Heart right ventricle (tissue), 16 donors: ENCODE measurements at regions of chr15 and their contacts with region 1.

Region 1: DNA sequence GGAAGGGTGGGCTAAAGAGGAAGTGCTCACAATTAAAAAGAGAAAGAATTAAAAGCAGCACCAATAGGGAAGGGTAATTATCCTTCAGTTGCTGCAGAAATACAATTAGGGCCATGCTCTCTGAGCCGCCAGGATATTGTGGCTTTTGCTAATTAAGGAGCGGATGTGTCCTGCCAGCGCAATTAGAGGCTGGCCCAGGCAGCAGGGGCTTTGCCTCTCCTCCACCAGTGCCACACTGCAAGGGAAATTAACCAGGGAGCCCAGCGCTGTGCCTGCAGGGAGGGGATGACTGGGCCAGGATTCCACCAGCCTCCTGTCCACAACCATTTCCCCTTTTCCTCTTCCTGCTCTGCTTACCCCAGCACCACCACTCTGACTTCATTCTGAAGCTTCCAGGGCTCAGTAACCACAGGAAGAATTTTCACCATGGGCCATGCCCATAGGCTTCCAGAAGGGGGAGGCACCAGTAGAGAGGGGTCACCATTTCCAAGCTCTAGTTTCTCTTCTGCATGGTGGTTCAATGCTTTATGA is 10.4 kb upstream of the AEN start:
- DNase-seq: no peak
- ATAC-seq: peak in 1 of 8 donors; percentile 21
- H3K4me3 ChIP-seq: no peak overlapping the region
- H3K27ac ChIP-seq: no peak overlapping the region
- H3K4me1 ChIP-seq: peaks cover 0 to 6% (median 0%) of the 10 kb centered on the region in 9 donors
- H3K27me3 ChIP-seq: peaks cover 8 to 31% (median 26%) of the 10 kb centered on the region in 7 donors
- CTCF ChIP-seq: peak in 1 of 9 donors; percentile 10

Region 2: DNA sequence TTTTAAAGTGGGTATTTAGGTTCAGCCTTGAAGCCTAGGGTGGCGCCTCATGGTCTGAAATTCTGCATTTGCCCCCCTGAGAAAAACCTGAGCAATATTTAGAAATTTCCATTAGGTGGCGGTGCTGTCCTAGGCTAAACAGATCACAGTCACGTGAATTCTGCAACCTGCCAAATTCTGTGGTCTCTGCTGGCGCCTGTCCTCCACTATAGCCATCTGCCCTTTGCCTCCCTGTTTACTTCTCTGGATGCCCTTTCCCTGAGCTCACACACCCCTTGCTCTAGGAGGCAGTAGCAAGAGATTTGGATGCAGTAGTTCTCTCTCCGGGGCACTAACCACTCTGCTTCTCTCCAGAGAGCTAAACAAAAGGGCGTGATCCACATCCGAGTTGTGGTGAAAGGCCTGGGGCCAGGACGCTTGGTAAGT is 134.1 kb before region 1 on chr15:
- intact Hi-C with region 1: loop called (anchors 1 to 5 kb)
- DNase-seq: peak in 1 of 2 donors; percentile 33
- ATAC-seq: peak; percentile 62 to 87 (median 80)
- H3K4me3 ChIP-seq: no peak overlapping the region
- H3K27ac ChIP-seq: peak overlapping the region in 4 of 10 donors; percentile 28 to 57 (median 46)
- H3K4me1 ChIP-seq: peaks cover 0 to 19% (median 0%) of the 10 kb centered on the region in 9 donors
- H3K27me3 ChIP-seq: no peaks in the 10 kb centered on the region
- CTCF ChIP-seq: peak in 8 of 9 donors; percentile 42 to 65 (median 52)

Region 3: DNA sequence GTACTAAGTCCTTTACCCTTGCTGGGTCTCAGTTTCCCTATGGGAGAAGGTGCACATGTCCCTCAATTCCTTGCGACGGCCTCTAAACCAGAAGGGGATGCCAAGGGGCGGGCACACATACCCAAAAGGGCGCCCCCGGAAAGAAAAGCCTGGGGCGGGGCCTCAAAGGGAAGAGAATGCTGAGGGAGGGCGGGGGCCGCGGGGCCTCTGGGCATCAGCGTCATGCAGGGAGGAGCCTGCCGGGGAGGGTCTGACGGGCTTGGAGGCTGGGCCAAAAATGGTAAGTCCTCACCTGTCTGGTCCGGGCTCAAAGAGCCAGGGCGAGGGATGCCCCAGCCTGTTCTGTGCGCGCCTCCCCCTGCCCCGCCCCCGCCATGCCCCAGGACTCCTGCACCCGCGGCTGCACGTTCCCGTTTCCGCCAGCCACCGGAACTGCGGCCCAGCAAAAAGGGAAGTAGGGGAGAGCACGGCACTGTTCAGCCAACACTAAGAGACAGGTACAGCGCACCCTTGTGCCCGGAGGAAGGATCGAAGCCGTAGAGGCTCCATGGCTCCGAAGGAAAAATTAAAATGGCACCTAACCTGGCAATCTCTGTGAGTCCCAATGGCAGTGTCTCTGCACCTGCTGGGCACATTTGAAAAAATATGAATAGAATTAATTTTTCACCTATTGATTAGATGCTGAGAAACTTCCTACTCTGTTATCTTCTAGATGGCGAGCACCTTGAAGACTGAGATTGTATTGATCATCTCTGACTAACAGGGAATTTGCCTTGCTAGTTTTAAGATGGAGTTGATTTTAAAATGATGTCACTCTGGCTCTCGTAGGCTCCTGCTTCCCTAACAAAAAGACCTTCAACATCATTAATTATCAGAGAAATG is 64.3 kb before region 1 on chr15 and contains the start of gene DET1:
- intact Hi-C with region 1: loop called in 1 of 10 experiments (anchors 10 kb)
- DNase-seq: peak; percentile 93 to 96
- ATAC-seq: peak; percentile 97 to 100 (median 99)
- H3K4me3 ChIP-seq: peak within 1 kb of the TSS; percentile 45 to 88 (median 75)
- H3K27ac ChIP-seq: peak within 1 kb of the TSS; percentile 86 to 97 (median 94)
- H3K4me1 ChIP-seq: peaks cover 6 to 49% (median 27%) of the 10 kb centered on the region in 9 donors
- H3K27me3 ChIP-seq: no peaks in the 10 kb centered on the region
- CTCF ChIP-seq: peak; percentile 66 to 91 (median 77)
- total RNA-seq, gene DET1: 6.5 to 10.5 (median 8.7) TPM

Region 4: DNA sequence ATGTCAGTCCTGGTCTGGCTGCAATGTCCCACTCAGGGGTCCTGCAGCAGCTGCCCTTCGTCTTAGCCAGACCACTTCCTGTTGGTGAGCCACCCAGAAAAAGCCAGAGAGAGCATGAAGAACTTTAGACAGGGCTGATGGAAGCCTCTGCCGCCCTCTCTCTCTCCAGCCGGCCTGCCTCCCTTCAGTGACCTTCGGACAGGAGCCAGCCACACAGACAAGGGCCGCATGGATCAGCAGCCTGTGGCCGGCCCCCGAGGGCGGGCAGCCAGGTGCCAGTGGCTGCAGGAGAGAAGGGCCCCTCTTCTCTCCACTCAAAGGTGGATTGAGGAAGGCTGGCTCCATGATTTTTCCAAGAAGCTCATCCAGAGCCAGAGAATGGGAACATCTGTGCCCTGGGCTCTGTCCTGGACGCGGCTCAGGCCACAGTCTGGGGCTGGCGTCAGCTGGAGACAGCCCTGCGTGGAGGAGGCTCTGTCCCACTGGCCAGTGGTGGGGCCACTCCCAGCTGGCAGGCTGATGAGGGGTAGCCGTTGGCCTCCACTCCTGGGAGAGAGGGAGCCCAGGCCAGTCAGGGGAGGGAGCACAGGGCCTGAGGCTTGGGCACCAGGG is 71.0 kb after region 1 on chr15:
- intact Hi-C with region 1: no loop called
- DNase-seq: no peak
- ATAC-seq: peak in 4 of 8 donors; percentile 11 to 47 (median 25)
- H3K4me3 ChIP-seq: no peak overlapping the region
- H3K27ac ChIP-seq: no peak overlapping the region
- H3K4me1 ChIP-seq: peaks cover 0 to 3% (median 0%) of the 10 kb centered on the region in 9 donors
- H3K27me3 ChIP-seq: peaks cover 0 to 3% (median 0%) of the 10 kb centered on the region in 7 donors
- CTCF ChIP-seq: no peak